CD8-positive, alpha-beta T cell (primary cell): ENCODE measurements at regions of chr2 and their contacts with region 1.

Region 1: GRCh38 chr2:181499231-181499630 is 42.0 kb downstream of the ITGA4 start:
- DNase-seq: no peak
- ATAC-seq: no peak
- H3K4me3 ChIP-seq: no peak overlapping the region
- H3K4me3 Mint-ChIP-seq: no peak overlapping the region
- H3K27ac ChIP-seq: no peak overlapping the region
- H3K27ac Mint-ChIP-seq: peak overlapping the region; percentile 32
- H3K4me1 ChIP-seq: no peaks in the 10 kb centered on the region
- H3K4me1 Mint-ChIP-seq: peaks cover 8% of the 10 kb centered on the region
- H3K27me3 ChIP-seq: no peaks in the 10 kb centered on the region
- H3K27me3 Mint-ChIP-seq: no peaks in the 10 kb centered on the region
- CTCF ChIP-seq: no peak

Region 2: DNA sequence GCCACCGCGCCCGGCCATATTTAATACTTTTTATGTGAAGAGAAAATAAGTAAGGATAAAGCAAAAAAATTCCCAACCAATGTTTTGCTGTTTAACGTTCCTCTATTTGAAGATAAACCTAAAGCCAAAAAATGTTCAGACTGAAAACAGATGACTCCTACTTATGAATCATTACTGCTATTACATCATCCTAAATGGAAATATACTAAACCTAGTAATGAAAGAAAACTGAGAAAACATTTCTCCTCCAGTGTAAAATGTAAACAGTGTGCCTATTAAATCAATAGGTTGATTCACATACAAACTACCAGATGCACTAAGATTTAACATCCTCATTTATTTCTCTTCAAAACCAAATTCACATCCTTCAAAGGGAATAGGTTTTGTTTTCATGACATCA is 1535.6 kb before region 1 on chr2:
- CTCF ChIA-PET with region 1: no interaction called
- POLR2A ChIA-PET with region 1: no interaction called
- intact Hi-C with region 1: loop called in 1 of 2 experiments (anchors 10 kb)
- DNase-seq: no peak
- ATAC-seq: no peak
- H3K4me3 ChIP-seq: no peak overlapping the region
- H3K4me3 Mint-ChIP-seq: no peak overlapping the region
- H3K27ac ChIP-seq: no peak overlapping the region
- H3K27ac Mint-ChIP-seq: no peak overlapping the region
- H3K4me1 ChIP-seq: no peaks in the 10 kb centered on the region
- H3K4me1 Mint-ChIP-seq: peaks cover 3% of the 10 kb centered on the region
- H3K27me3 ChIP-seq: no peaks in the 10 kb centered on the region
- H3K27me3 Mint-ChIP-seq: no peaks in the 10 kb centered on the region
- CTCF ChIP-seq: no peak

Region 3: DNA sequence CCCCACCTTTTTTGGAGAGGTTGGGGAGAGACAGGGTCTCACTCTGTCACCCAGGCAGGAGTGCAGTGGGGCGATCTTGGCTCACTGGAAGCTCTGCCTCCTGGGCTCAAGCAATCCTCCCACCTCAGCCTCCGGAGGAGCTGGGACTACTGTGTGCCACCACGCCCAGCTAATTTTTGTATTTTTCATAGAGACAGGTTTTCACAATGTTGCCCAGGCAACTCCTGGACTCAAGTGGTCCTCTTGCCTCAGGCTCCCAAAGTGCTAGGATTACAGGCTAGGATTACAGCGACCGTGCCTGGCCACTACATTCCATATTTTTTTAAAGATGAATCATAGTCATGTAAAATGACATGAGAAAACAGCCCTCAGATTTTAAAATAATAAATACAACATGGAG is 1524.5 kb before region 1 on chr2:
- CTCF ChIA-PET with region 1: no interaction called
- POLR2A ChIA-PET with region 1: no interaction called
- intact Hi-C with region 1: loop called (anchors 10 kb)
- DNase-seq: no peak
- ATAC-seq: no peak
- H3K4me3 ChIP-seq: no peak overlapping the region
- H3K4me3 Mint-ChIP-seq: no peak overlapping the region
- H3K27ac ChIP-seq: no peak overlapping the region
- H3K27ac Mint-ChIP-seq: no peak overlapping the region
- H3K4me1 ChIP-seq: no peaks in the 10 kb centered on the region
- H3K4me1 Mint-ChIP-seq: peaks cover 8% of the 10 kb centered on the region
- H3K27me3 ChIP-seq: no peaks in the 10 kb centered on the region
- H3K27me3 Mint-ChIP-seq: no peaks in the 10 kb centered on the region
- CTCF ChIP-seq: no peak

Region 4: GRCh38 chr2:181483876-181484275 is 15.4 kb before region 1 on chr2:
- CTCF ChIA-PET with region 1: no interaction called
- POLR2A ChIA-PET with region 1: interaction called, 4 read pairs
- intact Hi-C with region 1: loop called in 1 of 2 experiments (anchors 2 kb)
- DNase-seq: no peak
- ATAC-seq: no peak
- H3K4me3 ChIP-seq: no peak overlapping the region
- H3K4me3 Mint-ChIP-seq: no peak overlapping the region
- H3K27ac ChIP-seq: no peak overlapping the region
- H3K27ac Mint-ChIP-seq: peak overlapping the region; percentile 69
- H3K4me1 ChIP-seq: no peaks in the 10 kb centered on the region
- H3K4me1 Mint-ChIP-seq: peaks cover 26% of the 10 kb centered on the region
- H3K27me3 ChIP-seq: no peaks in the 10 kb centered on the region
- H3K27me3 Mint-ChIP-seq: no peaks in the 10 kb centered on the region
- CTCF ChIP-seq: no peak

Region 5: DNA sequence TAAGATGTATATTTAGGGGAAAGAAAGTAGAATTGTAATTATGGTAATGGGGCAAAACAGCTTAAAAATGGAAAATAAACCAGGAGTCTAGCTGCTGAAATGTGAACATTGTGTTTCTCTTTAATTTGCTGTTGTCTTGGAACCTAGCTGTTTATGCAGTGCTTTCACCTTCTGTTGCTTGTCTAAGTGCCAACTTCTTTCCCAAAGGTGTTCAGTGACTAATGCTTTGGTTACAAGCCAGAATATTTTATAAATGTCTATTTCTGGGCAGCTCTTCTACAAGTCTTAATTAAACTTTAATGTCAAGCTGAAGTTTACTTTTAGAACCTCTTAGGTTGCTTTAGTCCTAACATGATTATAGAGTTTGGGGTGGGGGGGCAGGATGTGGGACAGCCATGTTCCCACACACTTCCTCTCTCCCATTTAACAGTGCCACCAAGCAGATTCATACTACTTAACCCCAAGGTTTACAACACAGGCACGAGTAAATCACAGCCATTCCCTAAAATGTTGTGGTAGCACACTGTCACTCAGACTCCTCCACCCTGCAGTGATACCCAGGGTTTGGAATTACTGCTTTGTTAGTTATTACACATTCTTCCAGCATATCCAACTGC is 18.6 kb after region 1 on chr2:
- CTCF ChIA-PET with region 1: no interaction called
- POLR2A ChIA-PET with region 1: interaction called, 4 read pairs
- intact Hi-C with region 1: loop called (anchors 2 kb)
- DNase-seq: peak in 7 of 9 experiments; percentile 4 to 53 (median 21)
- ATAC-seq: peak; percentile 58
- H3K4me3 ChIP-seq: no peak overlapping the region
- H3K4me3 Mint-ChIP-seq: peak overlapping the region; percentile 2
- H3K27ac ChIP-seq: peak overlapping the region in 1 of 2 experiments; percentile 17
- H3K27ac Mint-ChIP-seq: peak overlapping the region; percentile 87
- H3K4me1 ChIP-seq: peaks cover 31% of the 10 kb centered on the region
- H3K4me1 Mint-ChIP-seq: peaks cover 51% of the 10 kb centered on the region
- H3K27me3 ChIP-seq: no peaks in the 10 kb centered on the region
- H3K27me3 Mint-ChIP-seq: no peaks in the 10 kb centered on the region
- CTCF ChIP-seq: no peak

Region 6: GRCh38 chr2:181552808-181553207 is 53.6 kb after region 1 on chr2:
- CTCF ChIA-PET with region 1: no interaction called
- POLR2A ChIA-PET with region 1: no interaction called
- intact Hi-C with region 1: no loop called
- DNase-seq: no peak
- ATAC-seq: no peak
- H3K4me3 ChIP-seq: no peak overlapping the region
- H3K4me3 Mint-ChIP-seq: no peak overlapping the region
- H3K27ac ChIP-seq: no peak overlapping the region
- H3K27ac Mint-ChIP-seq: no peak overlapping the region
- H3K4me1 ChIP-seq: no peaks in the 10 kb centered on the region
- H3K4me1 Mint-ChIP-seq: no peaks in the 10 kb centered on the region
- H3K27me3 ChIP-seq: no peaks in the 10 kb centered on the region
- H3K27me3 Mint-ChIP-seq: no peaks in the 10 kb centered on the region
- CTCF ChIP-seq: no peak

Region 7: GRCh38 chr2:181646415-181646987 is 147.3 kb after region 1 on chr2:
- CTCF ChIA-PET with region 1: no interaction called
- POLR2A ChIA-PET with region 1: no interaction called
- intact Hi-C with region 1: no loop called
- DNase-seq: no peak
- ATAC-seq: no peak
- H3K4me3 ChIP-seq: no peak overlapping the region
- H3K4me3 Mint-ChIP-seq: no peak overlapping the region
- H3K27ac ChIP-seq: no peak overlapping the region
- H3K27ac Mint-ChIP-seq: no peak overlapping the region
- H3K4me1 ChIP-seq: no peaks in the 10 kb centered on the region
- H3K4me1 Mint-ChIP-seq: no peaks in the 10 kb centered on the region
- H3K27me3 ChIP-seq: peaks cover 0 to 2% of the 10 kb centered on the region in 2 experiments
- H3K27me3 Mint-ChIP-seq: peaks cover 37% of the 10 kb centered on the region
- CTCF ChIP-seq: no peak